ENCODE measurements at regions of chr12 and their contacts with region 1.

Region 1: DNA sequence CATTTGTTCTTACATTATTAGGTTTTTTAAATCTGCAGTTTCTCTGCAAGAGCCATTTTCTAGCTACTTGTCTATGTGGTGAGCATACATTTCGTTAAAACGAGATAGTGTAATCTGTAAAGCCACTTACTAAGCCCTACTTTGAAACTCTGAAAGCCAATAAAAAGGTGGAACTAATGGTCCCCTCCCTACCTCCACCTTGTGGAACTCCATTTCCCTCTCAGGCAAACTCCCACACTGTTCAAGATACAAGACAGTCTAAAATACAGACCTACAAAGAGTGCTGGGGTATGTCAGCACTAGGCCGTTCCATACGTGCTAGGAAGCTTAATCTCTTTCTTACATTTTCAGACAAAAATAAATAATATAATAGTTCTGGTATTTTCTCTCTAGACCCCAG is 74.1 kb downstream of the DUSP6 start:
- DNase-seq: no peak
- H3K4me3 ChIP-seq: no peak overlapping the region
- H3K27ac ChIP-seq: no peak overlapping the region
- H3K4me1 ChIP-seq: peaks cover 6% of the 10 kb centered on the region
- H3K27me3 ChIP-seq: no peaks in the 10 kb centered on the region
- CTCF ChIP-seq: no peak
- POLR2A ChIP-seq: no peak

Region 2: GRCh38 chr12:89306827-89307473 is 28.8 kb after region 1 on chr12:
- intact Hi-C with region 1: no loop called
- DNase-seq: no peak
- H3K4me3 ChIP-seq: no peak overlapping the region
- H3K27ac ChIP-seq: no peak overlapping the region
- H3K4me1 ChIP-seq: no peaks in the 10 kb centered on the region
- H3K27me3 ChIP-seq: no peaks in the 10 kb centered on the region
- CTCF ChIP-seq: no peak
- POLR2A ChIP-seq: no peak

Region 3: GRCh38 chr12:89988188-89988915 is 710.2 kb after region 1 on chr12:
- intact Hi-C with region 1: loop called (anchors 5 kb)
- DNase-seq: no peak
- H3K4me3 ChIP-seq: no peak overlapping the region
- H3K27ac ChIP-seq: no peak overlapping the region
- H3K4me1 ChIP-seq: no peaks in the 10 kb centered on the region
- H3K27me3 ChIP-seq: no peaks in the 10 kb centered on the region
- CTCF ChIP-seq: no peak
- POLR2A ChIP-seq: no peak

Measured in vagina (tissue), 2 donors.